Right ventricle myocardium inferior (tissue), 1 donor: ENCODE measurements at regions of chr3 and their contacts with region 1.

Region 1: DNA sequence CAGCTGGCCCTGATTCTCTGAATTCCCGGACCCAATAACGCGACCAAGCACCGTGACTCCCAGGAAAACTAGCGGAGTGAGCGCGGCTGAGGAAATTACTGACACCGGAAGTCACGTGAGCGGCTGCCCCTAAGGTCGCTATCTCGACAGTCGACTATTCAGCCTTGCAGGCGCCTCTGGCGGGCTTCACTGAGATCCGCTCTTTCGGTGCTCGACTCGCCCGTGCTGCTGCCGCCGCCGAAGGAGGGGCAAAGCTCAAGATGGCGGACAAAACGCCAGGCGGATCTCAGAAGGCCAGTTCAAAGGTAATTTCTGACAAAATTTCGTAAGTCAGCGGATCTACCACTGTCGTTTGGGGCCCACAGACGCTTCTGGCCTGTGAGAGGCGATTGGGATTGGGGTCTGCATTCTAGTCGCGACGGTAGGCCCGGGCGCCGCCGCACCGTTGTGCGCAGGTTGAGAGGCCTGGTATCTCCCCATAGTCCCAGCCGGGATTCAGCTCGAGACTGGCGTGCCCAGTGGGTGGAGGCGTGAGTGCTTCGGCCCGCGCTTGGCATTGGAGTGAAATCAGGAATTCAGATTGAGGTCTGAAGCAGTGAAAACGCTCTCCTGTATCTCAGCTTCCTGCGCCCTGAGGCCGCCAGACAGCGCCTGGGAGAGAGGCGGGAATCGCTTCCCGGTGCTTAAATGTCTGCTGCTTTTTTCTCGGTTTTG is at the start of gene U2SURP:
- DNase-seq: peak; percentile 97
- ATAC-seq: peak; percentile 97
- total RNA-seq, gene U2SURP: 41.9 TPM

Region 2: GRCh38 chr3:142578327-142579223 is 423.0 kb before region 1 on chr3 and contains the start of gene ATR:
- intact Hi-C with region 1: loop called (anchors 5 kb)
- DNase-seq: peak; percentile 98
- ATAC-seq: peak; percentile 99
- total RNA-seq, gene ATR: 8.5 TPM

Region 3: GRCh38 chr3:142595951-142596725 is 405.4 kb before region 1 on chr3 and contains the start of gene PLS1:
- intact Hi-C with region 1: loop called (anchors 5 kb)
- DNase-seq: peak; percentile 90
- ATAC-seq: peak; percentile 96
- total RNA-seq, gene PLS1: 2.5 TPM

Region 4: GRCh38 chr3:142723968-142724681 is 277.4 kb before region 1 on chr3 and contains the start of gene TRPC1:
- intact Hi-C with region 1: loop called (anchors 10 kb)
- DNase-seq: peak; percentile 87
- ATAC-seq: peak; percentile 94
- total RNA-seq, gene TRPC1: 9.2 TPM

Region 5: GRCh38 chr3:143060906-143061305 is 59.4 kb after region 1 on chr3:
- intact Hi-C with region 1: no loop called
- DNase-seq: no peak
- ATAC-seq: no peak

Region 6: DNA sequence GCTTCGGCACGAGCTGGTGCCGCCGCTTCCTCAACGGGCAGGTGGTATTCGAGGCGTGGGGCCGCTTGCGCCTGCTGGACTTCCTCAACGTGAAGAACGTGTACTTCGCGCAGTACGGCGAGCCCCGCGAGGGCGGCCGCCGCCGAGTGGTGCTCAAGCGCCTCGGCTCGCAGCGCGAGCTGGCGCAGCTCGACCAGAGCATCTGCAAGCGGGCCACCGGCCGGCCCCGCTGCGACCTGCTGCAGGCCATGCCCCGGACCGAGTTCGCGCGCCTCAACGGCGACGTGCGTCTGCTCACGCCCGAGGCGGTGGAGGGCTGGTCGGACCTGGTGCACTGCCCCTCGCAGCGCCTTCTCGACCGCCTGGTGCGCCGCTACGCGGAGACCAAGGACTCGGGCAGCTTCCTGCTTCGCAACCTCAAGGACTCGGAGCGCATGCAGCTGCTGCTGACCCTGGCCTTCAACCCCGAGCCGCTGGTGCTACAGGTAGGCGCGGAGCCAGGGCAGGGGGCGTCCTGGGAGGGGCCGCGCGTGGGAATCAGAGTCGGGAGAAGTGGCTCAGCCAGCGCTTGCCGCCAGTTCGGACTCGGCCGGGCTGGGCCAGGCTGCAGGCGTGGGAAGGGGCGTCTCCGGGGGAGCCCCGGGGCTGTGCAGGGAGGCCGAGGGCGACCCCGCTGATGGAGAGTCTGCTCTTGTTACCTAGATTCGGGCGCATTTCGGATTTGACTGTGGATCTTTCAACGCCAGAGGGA is 971.2 kb after region 1 on chr3:
- intact Hi-C with region 1: loop called (anchors 5 kb)
- DNase-seq: peak; percentile 94
- ATAC-seq: peak; percentile 55